ENCODE measurements at regions of chr17 and their contacts with region 1.

Region 1: DNA sequence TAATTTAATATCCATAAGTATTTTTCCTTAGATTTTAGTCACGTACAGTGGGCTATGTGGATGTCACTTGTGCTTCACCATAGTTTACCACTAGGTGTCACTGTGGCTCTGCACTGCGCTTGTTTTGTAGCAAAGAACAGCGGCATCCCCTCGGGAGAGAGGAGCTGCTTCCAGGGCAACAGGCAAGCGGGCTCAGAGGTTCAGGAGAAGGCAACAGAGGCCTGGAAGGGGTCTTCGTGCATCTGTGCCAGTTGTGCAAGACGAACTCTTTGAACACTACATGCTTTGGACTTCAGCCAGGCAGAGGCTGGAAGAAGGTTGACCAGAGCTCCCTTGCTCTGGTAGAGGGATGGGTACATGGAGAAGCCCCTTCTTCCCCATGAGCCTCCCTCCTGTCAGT is 20.6 kb downstream of the CYB561 start:
- DNase-seq: peak; percentile 77 to 84
- ATAC-seq: peak; percentile 89
- H3K4me3 ChIP-seq: no peak overlapping the region
- H3K27ac ChIP-seq: no peak overlapping the region
- H3K4me1 ChIP-seq: no peaks in the 10 kb centered on the region
- H3K27me3 ChIP-seq: no peaks in the 10 kb centered on the region

Region 2: DNA sequence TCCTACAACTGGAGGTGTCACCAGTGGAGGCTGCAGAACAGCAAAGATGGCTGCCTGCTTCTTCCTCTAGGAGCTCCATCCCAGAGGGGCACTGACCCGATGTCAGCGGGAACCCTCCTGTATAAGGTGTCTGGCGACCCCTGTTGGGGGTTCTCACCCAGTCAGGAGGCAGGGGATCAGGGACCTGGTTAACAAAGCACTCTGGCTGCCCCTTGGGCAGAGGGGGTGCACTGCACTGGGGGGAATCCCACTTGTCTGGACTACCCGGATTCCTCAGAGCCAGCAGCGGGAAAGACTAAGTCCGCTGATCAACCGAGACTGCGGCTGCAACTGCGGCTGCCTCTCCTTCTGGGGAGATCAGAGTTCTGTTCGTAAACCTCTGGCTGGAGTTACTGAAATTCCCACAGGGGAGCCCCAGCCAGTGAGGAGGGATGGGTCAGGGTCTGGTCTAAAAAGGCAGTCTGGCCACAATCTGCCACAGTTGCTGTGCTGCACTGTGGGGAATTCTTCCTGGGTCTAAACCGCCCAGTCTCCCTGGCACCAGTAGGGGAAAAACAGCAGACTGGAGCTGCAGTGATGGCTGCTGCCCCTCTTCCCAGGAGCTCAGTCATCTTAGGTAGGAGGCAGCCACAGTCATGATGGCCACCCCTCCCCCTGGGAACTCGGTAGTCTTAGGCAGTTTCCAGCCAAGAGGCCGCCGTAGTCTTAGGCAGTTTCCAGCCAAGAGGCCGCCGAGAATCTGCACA is 192.7 kb before region 1 on chr17:
- intact Hi-C with region 1: no loop called
- DNase-seq: peak in 1 of 2 donors; percentile 60
- ATAC-seq: no peak
- H3K4me3 ChIP-seq: no peak overlapping the region
- H3K27ac ChIP-seq: no peak overlapping the region
- H3K4me1 ChIP-seq: no peaks in the 10 kb centered on the region
- H3K27me3 ChIP-seq: no peaks in the 10 kb centered on the region

Region 3: DNA sequence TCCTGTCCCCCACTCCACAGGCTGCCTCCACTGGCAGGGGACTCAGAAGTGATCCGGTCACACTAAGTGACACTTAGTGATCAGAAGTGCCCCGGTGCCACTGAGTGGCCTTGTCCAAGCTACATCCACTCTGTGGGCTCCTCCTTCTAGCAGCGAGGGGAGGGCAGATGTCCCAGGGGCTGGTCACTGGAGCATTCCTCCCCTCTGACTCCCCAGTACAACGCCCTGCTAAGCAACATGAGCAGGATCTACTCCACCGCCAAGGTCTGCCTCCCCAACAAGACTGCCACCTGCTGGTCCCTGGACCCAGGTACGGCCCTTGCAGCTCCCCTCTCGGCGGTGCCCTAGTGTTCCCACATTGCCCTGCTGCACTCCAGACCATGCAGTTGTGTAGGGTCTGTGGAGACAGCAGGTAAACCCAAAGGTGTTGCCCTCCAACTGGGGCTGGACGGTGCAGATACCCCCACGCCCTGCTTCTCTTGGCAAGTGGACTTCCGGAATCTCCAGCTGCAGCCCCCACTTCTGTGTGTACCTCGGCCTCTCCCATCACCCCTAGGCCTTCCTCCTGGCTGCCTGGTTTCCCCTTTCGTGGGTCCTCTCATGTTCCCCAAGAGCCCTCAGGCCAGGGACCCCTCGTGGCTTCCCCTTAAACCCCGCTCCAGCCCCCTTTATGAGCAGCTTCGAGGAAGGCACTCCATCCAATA is 53.5 kb after region 1 on chr17:
- intact Hi-C with region 1: loop called (anchors 2 kb)
- DNase-seq: peak; percentile 84 to 93
- ATAC-seq: peak; percentile 76
- H3K4me3 ChIP-seq: no peak overlapping the region
- H3K27ac ChIP-seq: no peak overlapping the region
- H3K4me1 ChIP-seq: no peaks in the 10 kb centered on the region
- H3K27me3 ChIP-seq: no peaks in the 10 kb centered on the region

Region 4: DNA sequence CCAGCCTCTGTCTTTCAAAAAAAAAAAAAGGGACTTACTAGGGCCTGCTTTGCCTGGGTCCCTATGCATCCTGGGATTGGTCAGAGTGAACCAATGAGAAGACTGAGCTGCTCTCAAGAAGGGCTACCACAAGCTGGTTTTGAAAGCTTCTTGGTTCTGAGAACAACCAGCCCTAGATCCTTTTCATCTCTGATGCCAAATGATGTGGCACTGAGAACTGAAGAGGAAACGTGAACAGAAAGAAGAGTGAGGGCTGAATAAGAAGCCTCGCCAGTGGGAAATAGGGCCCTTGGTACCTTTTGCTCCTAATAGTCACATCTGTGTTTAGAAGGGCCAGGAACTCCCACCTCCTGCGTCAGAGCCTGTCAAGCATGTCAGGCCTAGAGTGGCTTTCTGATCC is 185.9 kb after region 1 on chr17:
- intact Hi-C with region 1: loop called (anchors 1 to 2 kb)
- DNase-seq: no peak
- ATAC-seq: no peak
- H3K4me3 ChIP-seq: no peak overlapping the region
- H3K27ac ChIP-seq: no peak overlapping the region
- H3K4me1 ChIP-seq: no peaks in the 10 kb centered on the region
- H3K27me3 ChIP-seq: no peaks in the 10 kb centered on the region

Measured in aorta (tissue), 5 donors.